ENCODE measurements at regions of chr17 and their contacts with region 1.

Region 1: GRCh38 chr17:3732210-3732621 is 8.5 kb downstream of the HASPIN start:
- DNase-seq: no peak
- ATAC-seq: peak; percentile 76
- H3K4me3 ChIP-seq: peak overlapping the region in 1 of 2 experiments; percentile 18; a peak in 1 of 4 replicates
- H3K27ac ChIP-seq: peak overlapping the region; percentile 3; the same call in 1 of the 2 replicates
- H3K4me1 ChIP-seq: peaks cover 4% of the 10 kb centered on the region; the same call in 1 of the 2 replicates
- H3K27me3 ChIP-seq: no peaks in the 10 kb centered on the region
- CTCF ChIP-seq: peak; percentile 52; the same call in 1 of the 2 replicates

Region 2: DNA sequence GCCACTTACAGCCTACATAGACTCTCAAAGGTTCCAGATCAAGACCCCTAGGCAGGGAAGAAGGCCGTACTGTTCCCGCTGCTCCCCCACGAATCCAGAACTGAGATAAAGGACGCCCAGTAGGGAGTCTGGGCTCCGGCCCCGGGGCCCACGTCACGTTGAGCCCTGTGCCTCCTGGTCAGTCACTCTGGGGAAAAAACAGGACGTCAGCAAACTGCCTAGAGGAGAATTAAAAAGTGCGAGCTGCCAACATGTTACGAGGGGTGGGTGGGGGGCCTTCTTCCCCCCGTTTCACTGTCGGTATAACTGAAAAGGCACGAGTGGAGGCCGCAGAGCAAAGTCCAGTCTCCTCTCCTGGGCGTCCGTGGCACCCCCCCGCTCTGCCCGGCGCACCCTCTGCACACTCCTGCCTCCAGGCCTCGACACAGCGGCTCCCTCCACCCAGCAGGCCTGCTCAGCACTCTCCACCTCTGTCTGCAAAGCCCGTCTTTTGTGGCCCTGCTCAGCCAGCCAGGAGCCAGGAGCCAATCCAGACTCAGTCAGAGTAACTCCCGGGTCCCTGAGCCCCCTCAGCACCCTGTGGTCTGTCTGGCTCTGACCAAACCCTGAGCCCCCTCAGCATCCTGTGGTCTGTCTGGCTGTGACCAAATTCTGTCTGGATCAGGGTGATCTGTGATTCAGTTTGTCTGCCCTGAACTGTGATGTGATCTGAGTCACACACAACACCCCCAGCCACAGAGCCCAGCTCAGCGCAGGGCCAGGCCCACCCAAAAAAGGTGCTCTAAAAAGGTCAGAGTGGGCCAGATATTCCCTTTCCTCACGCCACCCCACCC is 62.6 kb after region 1 on chr17:
- CTCF ChIA-PET with region 1: no interaction called
- POLR2A ChIA-PET with region 1: no interaction called
- in situ Hi-C with region 1: no loop called
- intact Hi-C with region 1: no loop called
- DNase-seq: no peak
- ATAC-seq: peak; percentile 84
- H3K4me3 ChIP-seq: no peak overlapping the region
- H3K27ac ChIP-seq: peak overlapping the region; percentile 66
- H3K4me1 ChIP-seq: peaks cover 5% of the 10 kb centered on the region
- H3K27me3 ChIP-seq: no peaks in the 10 kb centered on the region
- CTCF ChIP-seq: no peak

Region 3: DNA sequence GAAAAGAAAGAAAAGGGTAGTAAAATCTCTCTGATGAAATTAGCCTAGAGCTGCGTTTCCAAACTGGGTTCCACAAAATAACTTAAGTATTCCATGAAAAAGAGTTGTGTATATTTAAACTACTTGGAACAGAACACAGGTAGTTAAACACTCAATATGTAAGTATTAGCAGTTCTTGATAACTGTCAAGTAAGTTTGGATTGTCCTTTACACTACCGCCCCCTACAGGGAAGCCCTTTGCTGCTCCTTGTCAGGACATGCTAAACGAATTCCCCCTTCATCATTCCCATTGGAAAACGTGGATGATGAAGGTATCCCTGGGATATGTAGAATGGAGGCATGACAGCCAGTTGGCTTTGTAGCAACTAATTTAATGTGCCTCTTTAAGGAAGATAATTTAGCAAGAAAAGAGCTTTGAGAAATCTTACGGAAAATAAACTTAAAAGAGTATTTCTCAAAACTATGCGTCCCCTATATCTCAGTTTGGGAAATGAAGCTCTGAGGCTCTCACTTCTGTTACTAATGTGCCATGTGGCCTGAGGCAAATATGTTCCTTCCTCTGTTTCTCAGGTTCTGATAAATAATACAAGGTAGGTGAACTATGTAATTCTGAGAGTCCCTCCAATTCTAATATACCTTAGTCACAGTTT is 95.0 kb after region 1 on chr17:
- CTCF ChIA-PET with region 1: interaction called, 5 read pairs
- POLR2A ChIA-PET with region 1: no interaction called
- in situ Hi-C with region 1: no loop called
- intact Hi-C with region 1: loop called (anchors 5 kb)
- DNase-seq: peak; percentile 43
- ATAC-seq: no peak
- H3K4me3 ChIP-seq: no peak overlapping the region
- H3K27ac ChIP-seq: no peak overlapping the region
- H3K4me1 ChIP-seq: no peaks in the 10 kb centered on the region
- H3K27me3 ChIP-seq: no peaks in the 10 kb centered on the region
- CTCF ChIP-seq: peak; percentile 76

Region 4: GRCh38 chr17:4017377-4017776 is 285.2 kb after region 1 on chr17:
- CTCF ChIA-PET with region 1: no interaction called
- POLR2A ChIA-PET with region 1: no interaction called
- in situ Hi-C with region 1: no loop called
- intact Hi-C with region 1: no loop called
- DNase-seq: no peak
- ATAC-seq: no peak
- H3K4me3 ChIP-seq: no peak overlapping the region
- H3K27ac ChIP-seq: no peak overlapping the region
- H3K4me1 ChIP-seq: no peaks in the 10 kb centered on the region
- H3K27me3 ChIP-seq: no peaks in the 10 kb centered on the region
- CTCF ChIP-seq: peak; percentile 61; the same call in 1 of the 2 replicates

Measured in Panc1 (cell line).